ENCODE measurements at regions of chr13 and their contacts with region 1.

Region 1: DNA sequence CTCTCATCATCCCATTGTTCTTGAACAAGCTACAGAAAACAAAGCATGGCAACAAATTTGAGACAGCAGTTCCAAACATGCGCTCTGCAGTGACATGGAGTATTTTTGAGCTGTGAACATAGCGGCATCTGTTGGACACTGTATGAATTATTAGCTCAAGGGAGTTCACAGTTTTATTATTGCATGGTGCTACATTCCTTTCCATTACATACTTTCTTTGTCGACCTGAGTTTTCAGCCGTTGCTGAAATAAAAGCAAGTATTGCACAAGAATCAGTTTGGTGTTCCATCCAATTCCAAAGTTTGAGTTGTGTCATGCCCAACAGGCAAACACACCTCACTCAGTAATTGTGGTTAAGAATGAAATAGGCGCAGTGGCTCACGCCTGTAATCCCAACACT is 30.1 kb upstream of the METTL21C start:
- DNase-seq: peak; percentile 2
- H3K4me3 Mint-ChIP-seq: no peak overlapping the region
- H3K27ac Mint-ChIP-seq: no peak overlapping the region
- H3K4me1 Mint-ChIP-seq: peaks cover 6% of the 10 kb centered on the region
- H3K27me3 Mint-ChIP-seq: no peaks in the 10 kb centered on the region
- CTCF ChIP-seq: no peak

Region 2: DNA sequence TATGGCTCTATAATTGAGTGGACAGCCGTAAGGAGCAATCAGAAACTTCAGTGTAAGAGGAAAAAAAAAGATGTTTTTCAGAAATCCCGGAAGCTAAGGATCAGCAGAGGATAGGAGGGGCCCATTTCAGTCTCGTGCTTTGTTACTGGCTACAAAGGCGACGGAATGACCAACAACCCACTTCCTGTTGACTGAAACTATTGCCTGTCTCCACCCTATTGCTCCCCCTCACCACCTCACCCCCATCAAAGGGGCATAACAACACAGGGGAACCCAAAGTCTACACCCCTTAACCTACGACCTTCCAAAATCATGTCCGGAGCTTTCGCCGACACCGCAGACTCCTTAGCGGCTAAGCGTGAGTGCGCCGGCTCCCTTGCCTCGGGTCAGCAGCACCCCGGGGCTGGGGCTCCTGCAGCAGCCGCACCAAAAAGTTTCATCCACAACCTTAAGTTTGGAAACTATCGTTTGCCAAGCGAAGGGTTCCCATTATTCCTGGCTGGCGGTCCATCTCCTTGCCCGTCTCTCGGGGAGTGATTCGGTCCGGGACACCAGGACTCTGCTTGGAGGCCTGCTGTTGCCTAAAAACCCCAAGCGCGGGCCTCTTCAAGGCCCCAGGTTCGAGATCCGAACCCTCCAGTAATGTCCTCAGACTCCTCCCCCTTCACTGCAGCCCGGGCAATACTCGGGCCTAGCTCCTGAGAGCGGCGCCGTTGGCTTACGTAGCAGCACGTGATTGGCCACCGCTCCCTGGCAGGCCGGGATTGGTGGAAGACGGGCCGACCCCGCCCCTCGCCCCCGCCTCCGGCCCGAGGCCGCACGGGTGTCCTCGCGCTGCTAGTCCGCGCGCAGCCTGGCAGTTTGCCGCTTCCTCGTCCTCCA is 128.5 kb before region 1 on chr13 and contains the start of gene TPP2:
- CTCF ChIA-PET with region 1: no interaction called
- intact Hi-C with region 1: loop called (anchors 5 kb)
- DNase-seq: peak; percentile 90
- H3K4me3 Mint-ChIP-seq: peak within 1 kb of the TSS; percentile 84
- H3K27ac Mint-ChIP-seq: peak within 1 kb of the TSS; percentile 86
- H3K4me1 Mint-ChIP-seq: peaks cover 7% of the 10 kb centered on the region
- H3K27me3 Mint-ChIP-seq: no peaks in the 10 kb centered on the region
- CTCF ChIP-seq: no peak
- total RNA-seq, gene TPP2: 17.3 and 19.1 TPM in 2 replicates